Calu3 (cell line): ENCODE measurements at regions of chr14 and their contacts with region 1.

Region 1: GRCh38 chr14:74493343-74494261 is at the start of gene ISCA2:
- DNase-seq: peak; percentile 100
- H3K4me3 Mint-ChIP-seq: no peak within 1 kb of the TSS
- H3K27ac Mint-ChIP-seq: peak within 1 kb of the TSS; percentile 86
- H3K4me1 Mint-ChIP-seq: peaks cover 31% of the 10 kb centered on the region
- H3K27me3 Mint-ChIP-seq: no peaks in the 10 kb centered on the region
- CTCF ChIP-seq: no peak
- total RNA-seq, gene ISCA2: 23.7 and 26.9 TPM in 2 replicates

Region 2: GRCh38 chr14:74362361-74362915 is 131.2 kb before region 1 on chr14:
- CTCF ChIA-PET with region 1: no interaction called
- intact Hi-C with region 1: loop called (anchors 5 kb)
- DNase-seq: peak; percentile 79
- H3K4me3 Mint-ChIP-seq: no peak overlapping the region
- H3K27ac Mint-ChIP-seq: no peak overlapping the region
- H3K4me1 Mint-ChIP-seq: no peaks in the 10 kb centered on the region
- H3K27me3 Mint-ChIP-seq: peaks cover 74% of the 10 kb centered on the region
- CTCF ChIP-seq: peak; percentile 76

Region 3: GRCh38 chr14:74618078-74618952 is 124.7 kb after region 1 on chr14:
- CTCF ChIA-PET with region 1: no interaction called
- intact Hi-C with region 1: loop called (anchors 5 kb)
- DNase-seq: peak; percentile 68
- H3K4me3 Mint-ChIP-seq: peak overlapping the region; percentile 9
- H3K27ac Mint-ChIP-seq: peak overlapping the region; percentile 80
- H3K4me1 Mint-ChIP-seq: peaks cover 84% of the 10 kb centered on the region
- H3K27me3 Mint-ChIP-seq: peaks cover under 1% of the 10 kb centered on the region
- CTCF ChIP-seq: no peak

Region 4: DNA sequence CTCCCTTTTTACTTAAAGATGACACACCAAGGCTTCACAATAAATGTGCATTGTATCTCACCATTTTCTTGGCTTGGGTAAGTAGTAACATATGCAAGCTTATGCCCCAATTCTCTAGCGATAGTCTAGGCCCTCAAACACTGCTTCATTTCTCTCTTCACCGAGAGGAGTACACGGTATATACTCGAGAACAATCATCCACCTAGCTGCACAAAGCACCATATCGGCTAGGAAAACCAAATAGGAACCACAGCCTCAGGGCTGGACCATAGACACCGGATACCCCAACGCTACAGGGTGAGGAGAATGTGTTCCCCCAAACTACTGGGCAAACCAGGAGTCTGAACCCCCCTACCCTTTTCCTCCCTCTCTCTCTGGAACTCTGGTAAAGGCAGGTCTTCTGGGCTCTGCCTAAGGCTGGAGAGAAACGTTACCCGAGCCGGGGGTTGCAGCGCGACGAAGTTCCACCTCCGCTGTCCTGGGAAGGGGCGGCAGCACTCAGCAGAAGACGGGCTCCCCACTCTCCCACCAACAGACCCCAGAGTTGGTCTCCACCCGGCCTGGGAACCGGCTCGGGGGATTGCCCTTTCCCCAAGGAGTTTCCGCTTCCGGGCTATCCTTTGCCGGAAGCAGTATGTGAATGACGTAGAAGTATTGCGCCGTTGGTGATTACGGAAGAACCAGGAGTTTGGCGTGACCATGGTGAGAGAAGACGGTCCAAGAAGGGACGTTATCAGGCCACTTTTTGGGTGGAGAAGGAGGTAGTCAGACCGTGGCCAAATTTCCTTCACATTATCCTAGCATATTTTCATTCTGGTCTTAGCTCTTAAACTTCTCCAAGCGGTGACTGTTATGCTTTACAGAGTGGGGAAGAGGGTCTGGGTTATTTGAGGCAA is 219.1 kb after region 1 on chr14 and contains the starts of genes AREL1 and FCF1:
- CTCF ChIA-PET with region 1: no interaction called
- intact Hi-C with region 1: no loop called
- DNase-seq: peak; percentile 80
- H3K4me3 Mint-ChIP-seq: peak within 1 kb of the TSS; percentile 92
- H3K27ac Mint-ChIP-seq: peak within 1 kb of the TSS; percentile 99
- H3K4me1 Mint-ChIP-seq: peaks cover 10% of the 10 kb centered on the region
- H3K27me3 Mint-ChIP-seq: no peaks in the 10 kb centered on the region
- CTCF ChIP-seq: no peak
- total RNA-seq, gene AREL1: 31.9 and 40.3 TPM in 2 replicates
- total RNA-seq, gene FCF1: 58.0 and 60.9 TPM in 2 replicates